ENCODE measurements at regions of chr12 and their contacts with region 1.

Region 1: DNA sequence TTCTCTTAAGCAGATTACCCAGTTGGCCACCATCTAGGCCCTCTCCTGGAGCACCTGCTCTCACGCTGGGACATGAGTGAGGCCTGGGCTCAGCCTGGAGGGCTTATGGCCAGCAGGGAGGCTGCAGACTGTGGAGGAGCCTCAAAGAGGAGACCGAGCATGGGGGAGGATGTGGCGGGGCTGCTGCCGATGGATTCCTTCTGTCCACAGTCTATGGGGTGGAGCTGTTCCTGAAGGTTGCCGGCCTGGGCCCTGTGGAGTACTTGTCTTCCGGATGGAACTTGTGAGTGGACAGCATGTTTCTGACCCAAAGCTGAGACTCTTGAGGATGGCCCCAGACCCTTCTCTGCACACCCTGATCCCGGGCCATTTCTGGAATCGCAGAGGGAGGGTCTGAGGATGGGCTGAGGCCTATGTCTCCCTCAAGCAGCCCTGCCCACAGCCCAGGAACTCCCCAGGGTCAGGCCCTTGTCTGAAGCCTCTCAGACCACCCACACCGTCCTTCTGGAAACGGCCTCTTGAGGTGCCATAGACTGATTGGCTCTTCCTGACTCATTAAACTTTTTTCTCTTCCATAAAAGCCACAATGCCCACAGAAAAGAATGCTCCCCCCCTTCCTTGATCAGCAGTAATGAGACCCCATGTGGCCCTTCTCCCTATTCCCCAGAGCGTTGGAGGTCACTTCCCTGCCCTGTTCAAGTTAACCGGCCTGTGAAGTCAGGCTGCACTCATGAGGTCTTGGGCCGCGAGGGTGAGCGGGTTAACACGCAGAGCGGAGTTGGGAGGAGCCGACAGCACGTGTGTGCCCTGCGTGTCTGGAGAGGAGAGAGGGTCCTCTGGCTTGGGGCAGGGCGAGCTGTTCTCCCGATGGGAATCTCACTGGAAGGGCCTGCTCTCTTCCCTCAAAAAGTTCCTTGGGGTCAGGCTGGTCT is 49.0 kb downstream of the SLC8B1 start:
- DNase-seq: no peak
- H3K4me3 ChIP-seq: no peak overlapping the region
- H3K27ac ChIP-seq: no peak overlapping the region
- H3K4me1 ChIP-seq: no peaks in the 10 kb centered on the region
- H3K27me3 ChIP-seq: no peaks in the 10 kb centered on the region
- CTCF ChIP-seq: no peak

Region 2: DNA sequence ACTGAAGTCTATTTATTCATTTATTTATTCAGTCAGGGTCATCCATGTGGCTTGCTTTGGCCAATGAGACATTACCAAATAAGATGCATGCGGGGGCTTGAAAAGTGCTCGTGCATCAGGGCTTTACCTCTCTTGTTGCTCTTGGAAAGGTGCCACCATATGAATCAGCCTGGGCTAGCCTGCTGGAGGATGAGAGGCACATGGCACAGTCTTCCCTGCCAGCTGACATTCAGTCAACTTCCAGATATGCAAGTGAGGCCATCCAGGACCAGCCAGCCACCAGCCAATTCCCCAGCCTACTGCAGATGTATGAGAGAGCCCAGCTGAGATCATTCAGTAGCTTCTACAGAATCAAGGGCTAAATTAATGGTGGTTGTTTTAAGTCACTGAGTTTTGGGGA is 599.6 kb before region 1 on chr12:
- CTCF ChIA-PET with region 1: no interaction called
- POLR2A ChIA-PET with region 1: no interaction called
- intact Hi-C with region 1: no loop called
- DNase-seq: no peak
- H3K4me3 ChIP-seq: no peak overlapping the region
- H3K27ac ChIP-seq: no peak overlapping the region
- H3K4me1 ChIP-seq: no peaks in the 10 kb centered on the region
- H3K27me3 ChIP-seq: peaks cover 33% of the 10 kb centered on the region
- CTCF ChIP-seq: no peak

Region 3: GRCh38 chr12:113161414-113162016 is 124.4 kb before region 1 on chr12:
- CTCF ChIA-PET with region 1: no interaction called
- POLR2A ChIA-PET with region 1: interaction called, 10 read pairs
- intact Hi-C with region 1: no loop called
- DNase-seq: peak in 1 of 2 experiments; percentile 44
- H3K4me3 ChIP-seq: no peak overlapping the region
- H3K27ac ChIP-seq: no peak overlapping the region
- H3K4me1 ChIP-seq: no peaks in the 10 kb centered on the region
- H3K27me3 ChIP-seq: no peaks in the 10 kb centered on the region
- CTCF ChIP-seq: no peak

Region 4: DNA sequence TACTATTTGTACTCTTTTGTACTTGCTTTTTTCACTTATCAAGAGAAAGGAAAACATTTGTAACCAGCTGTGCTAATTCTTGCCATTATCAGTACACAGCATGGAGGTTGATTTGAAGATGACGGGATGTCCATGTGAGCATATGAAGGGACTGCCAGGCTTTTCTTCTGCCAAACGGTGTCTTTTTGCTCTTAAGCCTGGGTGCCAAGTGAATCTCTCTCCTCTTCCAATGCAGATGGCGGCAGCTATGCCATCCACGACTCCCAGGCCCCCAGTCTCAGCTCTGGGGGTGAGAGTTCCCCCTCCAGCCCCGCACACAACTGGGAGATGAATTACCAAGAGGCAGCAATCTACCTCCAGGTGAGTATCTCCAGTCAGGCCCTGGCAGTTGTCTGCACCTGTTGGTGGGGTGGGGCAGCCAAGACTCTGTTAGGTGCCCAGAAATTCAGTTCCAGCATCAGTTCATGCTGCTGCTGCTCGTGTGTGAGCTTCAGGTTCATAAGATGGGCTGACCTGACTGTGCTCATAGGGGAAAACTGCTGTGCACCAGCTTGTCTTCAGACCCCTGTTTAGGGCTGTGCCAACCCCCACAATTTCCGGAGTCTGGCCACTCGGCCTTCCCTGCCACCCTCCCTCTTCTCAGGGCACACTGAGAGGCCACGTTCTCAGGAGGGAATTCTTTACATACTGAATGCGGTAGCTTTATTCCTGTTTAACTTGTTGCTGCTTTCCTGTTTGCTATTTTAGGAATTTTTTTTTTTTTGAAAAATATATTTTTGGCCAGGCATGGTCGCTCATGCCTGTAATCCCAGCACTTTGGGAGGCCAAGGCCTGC is 25.6 kb before region 1 on chr12:
- CTCF ChIA-PET with region 1: no interaction called
- POLR2A ChIA-PET with region 1: interaction called, 13 read pairs
- intact Hi-C with region 1: no loop called
- DNase-seq: no peak
- H3K4me3 ChIP-seq: no peak overlapping the region
- H3K27ac ChIP-seq: no peak overlapping the region
- H3K4me1 ChIP-seq: no peaks in the 10 kb centered on the region; the same call in 1 of the 2 replicates
- H3K27me3 ChIP-seq: no peaks in the 10 kb centered on the region
- CTCF ChIP-seq: no peak